Activated B cell treated with CpG ODN at 0.5 μM for 24 hours (primary cell): ENCODE measurements at regions of chr12 and their contacts with region 1.

Region 1: GRCh38 chr12:32455607-32456071 is 56.3 kb downstream of the FGD4 start:
- DNase-seq: no peak
- ATAC-seq: peak; percentile 45
- H3K4me3 Mint-ChIP-seq: peak overlapping the region; percentile 7
- H3K27ac Mint-ChIP-seq: no peak overlapping the region
- H3K4me1 Mint-ChIP-seq: peaks cover 18% of the 10 kb centered on the region
- H3K27me3 Mint-ChIP-seq: no peaks in the 10 kb centered on the region
- CTCF ChIP-seq: peak; percentile 41

Region 2: GRCh38 chr12:31477687-31478086 is 978.0 kb before region 1 on chr12:
- CTCF ChIA-PET with region 1: no interaction called
- POLR2A ChIA-PET with region 1: no interaction called
- intact Hi-C with region 1: no loop called
- DNase-seq: no peak
- ATAC-seq: no peak
- H3K4me3 Mint-ChIP-seq: no peak overlapping the region
- H3K27ac Mint-ChIP-seq: peak overlapping the region; percentile 16
- H3K4me1 Mint-ChIP-seq: peaks cover 62% of the 10 kb centered on the region
- H3K27me3 Mint-ChIP-seq: no peaks in the 10 kb centered on the region
- CTCF ChIP-seq: no peak

Region 3: GRCh38 chr12:32419520-32419960 is 36.1 kb before region 1 on chr12:
- CTCF ChIA-PET with region 1: no interaction called
- POLR2A ChIA-PET with region 1: no interaction called
- intact Hi-C with region 1: no loop called
- DNase-seq: no peak
- ATAC-seq: no peak
- H3K4me3 Mint-ChIP-seq: no peak overlapping the region
- H3K27ac Mint-ChIP-seq: no peak overlapping the region
- H3K4me1 Mint-ChIP-seq: no peaks in the 10 kb centered on the region
- H3K27me3 Mint-ChIP-seq: peaks cover 9% of the 10 kb centered on the region
- CTCF ChIP-seq: no peak

Region 4: GRCh38 chr12:32558903-32559302 is 103.3 kb after region 1 on chr12:
- CTCF ChIA-PET with region 1: no interaction called
- POLR2A ChIA-PET with region 1: no interaction called
- intact Hi-C with region 1: loop called (anchors 5 kb)
- DNase-seq: no peak
- ATAC-seq: peak; percentile 92
- H3K4me3 Mint-ChIP-seq: peak overlapping the region; percentile 36
- H3K27ac Mint-ChIP-seq: peak overlapping the region; percentile 71
- H3K4me1 Mint-ChIP-seq: peaks cover 23% of the 10 kb centered on the region
- H3K27me3 Mint-ChIP-seq: no peaks in the 10 kb centered on the region
- CTCF ChIP-seq: no peak

Region 5: DNA sequence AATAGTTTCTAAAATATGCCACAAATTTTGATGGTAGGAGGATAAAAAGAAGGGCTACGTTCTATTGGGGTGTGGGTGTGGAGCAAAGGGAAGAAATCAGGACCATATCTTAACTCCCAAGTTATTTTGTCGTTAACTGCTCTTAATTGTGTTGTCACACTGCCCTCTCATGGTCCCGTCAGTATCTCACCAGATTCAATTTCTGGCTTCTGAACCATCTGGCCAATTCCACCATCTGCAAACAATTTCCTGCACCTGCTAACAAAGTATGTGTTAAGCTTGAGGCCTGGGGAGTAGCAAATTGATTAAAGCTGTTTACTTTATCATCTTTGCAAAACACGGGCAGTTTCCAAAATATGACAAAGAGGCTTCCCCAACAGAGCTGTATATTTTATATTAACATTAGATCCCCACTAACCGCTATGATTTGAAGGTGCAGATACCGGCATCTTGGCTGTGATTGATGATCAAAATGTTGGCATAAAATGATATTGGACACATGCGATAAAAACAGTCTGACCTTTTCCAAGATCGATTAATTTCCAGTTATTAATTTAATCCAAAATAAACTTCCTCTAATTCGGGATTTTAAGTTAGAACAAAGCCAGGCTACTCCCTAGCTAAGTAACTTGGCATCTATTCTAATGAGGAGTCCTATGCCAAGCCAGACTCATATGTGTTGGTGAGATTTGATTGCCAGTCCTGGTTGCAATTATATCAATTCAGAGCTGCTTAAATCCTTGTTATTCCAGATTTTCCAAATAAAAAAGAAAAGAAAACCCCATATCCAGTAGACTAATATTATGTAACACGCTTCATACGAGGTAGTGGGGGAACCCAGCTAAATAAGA is 216.5 kb after region 1 on chr12:
- CTCF ChIA-PET with region 1: interaction called, 35 read pairs
- POLR2A ChIA-PET with region 1: no interaction called
- intact Hi-C with region 1: loop called (anchors 1 kb)
- DNase-seq: no peak
- ATAC-seq: no peak
- H3K4me3 Mint-ChIP-seq: no peak overlapping the region
- H3K27ac Mint-ChIP-seq: no peak overlapping the region
- H3K4me1 Mint-ChIP-seq: peaks cover 23% of the 10 kb centered on the region
- H3K27me3 Mint-ChIP-seq: no peaks in the 10 kb centered on the region
- CTCF ChIP-seq: no peak

Region 6: GRCh38 chr12:32755654-32756475 is 300.2 kb after region 1 on chr12 and contains the start of gene YARS2:
- CTCF ChIA-PET with region 1: interaction called, 43 read pairs
- POLR2A ChIA-PET with region 1: interaction called, 4 read pairs
- intact Hi-C with region 1: loop called (anchors 1 kb)
- DNase-seq: peak; percentile 75
- ATAC-seq: peak; percentile 87
- H3K4me3 Mint-ChIP-seq: peak within 1 kb of the TSS; percentile 95
- H3K27ac Mint-ChIP-seq: peak within 1 kb of the TSS; percentile 92
- H3K4me1 Mint-ChIP-seq: peaks cover 17% of the 10 kb centered on the region
- H3K27me3 Mint-ChIP-seq: no peaks in the 10 kb centered on the region
- CTCF ChIP-seq: no peak
- total RNA-seq, gene YARS2: 19.6 and 23.2 TPM in 2 replicates

Region 7: GRCh38 chr12:34022079-34022830 is 1566.6 kb after region 1 on chr12 and contains the start of gene ALG10:
- CTCF ChIA-PET with region 1: interaction called, 10 read pairs
- POLR2A ChIA-PET with region 1: interaction called, 9 read pairs
- intact Hi-C with region 1: loop called (anchors 2 kb)
- DNase-seq: peak; percentile 90
- ATAC-seq: peak; percentile 98
- H3K4me3 Mint-ChIP-seq: peak within 1 kb of the TSS; percentile 94
- H3K27ac Mint-ChIP-seq: peak within 1 kb of the TSS; percentile 92
- H3K4me1 Mint-ChIP-seq: peaks cover 16% of the 10 kb centered on the region
- H3K27me3 Mint-ChIP-seq: peaks cover 4% of the 10 kb centered on the region
- CTCF ChIP-seq: peak; percentile 53
- total RNA-seq, gene ALG10: 14.8 and 19.6 TPM in 2 replicates